ENCODE measurements at regions of chr2 and their contacts with region 1.

Region 1: GRCh38 chr2:174682578-174683391 is 81.5 kb downstream of the CHRNA1 start:
- DNase-seq: peak; percentile 78 to 81
- ATAC-seq: peak; percentile 76 to 92 (median 85)
- H3K4me3 ChIP-seq: peak overlapping the region; percentile 76 to 97 (median 94)
- H3K27ac ChIP-seq: peak overlapping the region; percentile 76 to 92 (median 87)
- H3K4me1 ChIP-seq: peaks cover 0 to 53% (median 40%) of the 10 kb centered on the region in 9 donors
- H3K27me3 ChIP-seq: no peaks in the 10 kb centered on the region
- CTCF ChIP-seq: no peak

Region 2: DNA sequence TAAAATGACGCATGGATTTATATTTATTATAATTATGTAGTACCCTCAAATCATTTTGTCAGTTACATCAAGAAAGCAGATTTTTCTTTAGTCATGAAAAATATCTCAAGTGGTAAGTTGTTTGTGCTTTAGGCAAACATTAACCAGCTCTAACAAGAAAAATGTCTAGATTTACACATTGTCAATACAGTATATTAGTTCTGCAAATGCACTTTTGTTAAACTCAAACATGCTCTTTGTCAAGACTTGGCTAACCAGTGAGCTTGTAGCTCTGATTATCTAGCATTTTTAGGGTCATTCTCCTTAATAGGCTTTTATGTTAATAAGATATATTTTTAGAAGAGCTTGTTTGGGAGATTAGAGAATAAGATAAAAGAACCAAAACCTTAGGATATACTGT is 254.6 kb before region 1 on chr2:
- intact Hi-C with region 1: no loop called
- DNase-seq: no peak
- ATAC-seq: no peak
- H3K4me3 ChIP-seq: no peak overlapping the region
- H3K27ac ChIP-seq: no peak overlapping the region
- H3K4me1 ChIP-seq: no peaks in the 10 kb centered on the region
- H3K27me3 ChIP-seq: no peaks in the 10 kb centered on the region
- CTCF ChIP-seq: no peak

Region 3: DNA sequence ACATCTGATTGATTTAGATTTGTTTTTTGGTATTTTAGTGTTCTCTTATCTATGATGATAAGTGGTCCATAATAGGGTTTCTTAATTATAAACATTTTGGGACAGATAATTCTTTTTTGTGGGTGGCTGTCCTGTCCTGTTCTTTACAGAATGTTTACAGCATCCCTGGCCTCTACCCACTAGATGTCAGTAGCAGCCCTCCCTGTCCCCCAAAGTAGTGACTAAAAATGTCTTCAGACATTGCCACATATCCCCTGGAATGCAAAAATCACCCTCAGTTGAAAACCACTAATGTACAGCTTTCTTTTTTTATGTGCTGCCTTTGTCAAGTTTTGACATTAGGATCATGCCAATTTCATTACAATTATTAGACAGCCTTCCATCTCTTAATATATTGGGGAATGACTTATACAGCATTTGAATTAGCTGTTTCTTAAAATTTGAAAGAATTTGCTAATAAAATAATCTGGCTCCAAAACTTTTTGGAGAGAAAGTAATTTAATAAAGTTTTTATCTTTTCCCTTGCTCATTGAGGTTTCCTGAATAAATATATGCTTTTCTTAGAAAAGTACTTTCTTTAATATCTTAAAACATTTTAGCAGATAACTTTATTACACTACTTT is 104.7 kb before region 1 on chr2:
- intact Hi-C with region 1: loop called in 3 of 10 experiments (anchors 10 kb)
- DNase-seq: no peak
- ATAC-seq: peak in 3 of 8 donors; percentile 42 to 56 (median 48)
- H3K4me3 ChIP-seq: no peak overlapping the region
- H3K27ac ChIP-seq: no peak overlapping the region
- H3K4me1 ChIP-seq: peaks cover 0 to 41% (median 13%) of the 10 kb centered on the region in 9 donors
- H3K27me3 ChIP-seq: no peaks in the 10 kb centered on the region
- CTCF ChIP-seq: peak; percentile 15 to 62 (median 55)

Region 4: GRCh38 chr2:174603280-174603679 is 79.5 kb before region 1 on chr2:
- intact Hi-C with region 1: loop called in 4 of 10 experiments (anchors 5 to 10 kb)
- DNase-seq: peak; percentile 30 to 76
- ATAC-seq: peak; percentile 89 to 94 (median 90)
- H3K4me3 ChIP-seq: no peak overlapping the region
- H3K27ac ChIP-seq: peak overlapping the region in 2 of 10 donors; percentile 24 to 98
- H3K4me1 ChIP-seq: peaks cover 0 to 73% (median 18%) of the 10 kb centered on the region in 9 donors
- H3K27me3 ChIP-seq: no peaks in the 10 kb centered on the region
- CTCF ChIP-seq: peak; percentile 16 to 79 (median 63)

Region 5: GRCh38 chr2:174615871-174616436 is 66.8 kb before region 1 on chr2:
- intact Hi-C with region 1: loop called in 3 of 10 experiments (anchors 10 kb)
- DNase-seq: no peak
- ATAC-seq: peak; percentile 41 to 81 (median 66)
- H3K4me3 ChIP-seq: no peak overlapping the region
- H3K27ac ChIP-seq: peak overlapping the region in 7 of 10 donors; percentile 7 to 60 (median 17)
- H3K4me1 ChIP-seq: peaks cover 0 to 70% (median 25%) of the 10 kb centered on the region in 9 donors
- H3K27me3 ChIP-seq: no peaks in the 10 kb centered on the region
- CTCF ChIP-seq: no peak

Measured in heart right ventricle (tissue), 16 donors.